ENCODE measurements at regions of chr22 and their contacts with region 1.

Region 1: DNA sequence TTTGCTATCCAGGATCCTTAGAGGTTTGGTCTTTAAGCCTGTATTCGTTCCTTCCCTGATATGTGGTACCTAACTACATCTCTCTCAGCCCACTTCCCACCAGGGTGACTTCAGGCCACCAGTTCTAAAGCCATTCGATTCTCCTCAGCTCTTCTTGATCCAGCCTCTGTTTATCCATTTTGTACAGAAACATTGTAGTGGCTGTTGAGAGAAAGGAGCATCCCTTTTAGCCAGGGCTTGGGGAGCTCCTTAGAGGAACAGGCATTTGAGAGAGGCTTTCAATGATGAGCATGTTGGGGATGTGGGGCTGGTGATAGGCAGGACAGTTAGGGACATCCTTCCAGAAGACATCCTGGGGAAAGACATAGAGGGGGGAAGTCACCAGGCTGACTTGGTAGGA is 17.9 kb downstream of the UBE2L3 start:
- DNase-seq: no peak
- ATAC-seq: no peak
- H3K4me3 ChIP-seq: no peak overlapping the region
- H3K4me3 Mint-ChIP-seq: no peak overlapping the region
- H3K27ac ChIP-seq: no peak overlapping the region
- H3K27ac Mint-ChIP-seq: peak overlapping the region; percentile 28
- H3K4me1 ChIP-seq: peaks cover 64% of the 10 kb centered on the region
- H3K4me1 Mint-ChIP-seq: peaks cover 44% of the 10 kb centered on the region
- H3K27me3 ChIP-seq: no peaks in the 10 kb centered on the region
- H3K27me3 Mint-ChIP-seq: no peaks in the 10 kb centered on the region
- CTCF ChIP-seq: no peak

Region 2: DNA sequence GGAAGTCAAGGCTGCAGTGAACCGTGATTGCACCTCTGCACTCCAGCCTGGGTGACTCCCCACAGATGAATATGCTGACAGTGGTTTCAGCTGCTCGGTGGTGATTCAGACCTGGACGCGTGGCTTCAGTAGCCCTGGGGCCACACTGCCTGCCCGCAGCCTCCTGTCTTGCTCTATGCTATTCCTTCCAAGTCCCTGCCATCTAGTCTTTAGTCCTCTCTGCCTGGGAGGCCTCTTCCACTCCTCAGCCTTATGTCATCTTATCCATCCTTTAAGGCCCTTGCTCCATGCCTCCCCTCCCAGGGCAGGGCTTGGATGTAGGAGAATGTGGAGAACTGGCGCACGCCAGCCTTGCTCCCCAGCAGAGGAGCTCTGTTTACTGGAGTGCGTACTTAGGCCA is 21.4 kb after region 1 on chr22:
- CTCF ChIA-PET with region 1: no interaction called
- POLR2A ChIA-PET with region 1: interaction called, 3 read pairs
- intact Hi-C with region 1: loop called in 1 of 2 experiments (anchors 2 kb)
- DNase-seq: no peak
- ATAC-seq: no peak
- H3K4me3 ChIP-seq: no peak overlapping the region
- H3K4me3 Mint-ChIP-seq: no peak overlapping the region
- H3K27ac ChIP-seq: no peak overlapping the region
- H3K27ac Mint-ChIP-seq: peak overlapping the region; percentile 42
- H3K4me1 ChIP-seq: peaks cover 24% of the 10 kb centered on the region
- H3K4me1 Mint-ChIP-seq: peaks cover 46% of the 10 kb centered on the region
- H3K27me3 ChIP-seq: no peaks in the 10 kb centered on the region
- H3K27me3 Mint-ChIP-seq: no peaks in the 10 kb centered on the region
- CTCF ChIP-seq: no peak

Measured in CD4-positive, alpha-beta T cell (primary cell).